ENCODE measurements at regions of chrX and their contacts with region 1.

Region 1: DNA sequence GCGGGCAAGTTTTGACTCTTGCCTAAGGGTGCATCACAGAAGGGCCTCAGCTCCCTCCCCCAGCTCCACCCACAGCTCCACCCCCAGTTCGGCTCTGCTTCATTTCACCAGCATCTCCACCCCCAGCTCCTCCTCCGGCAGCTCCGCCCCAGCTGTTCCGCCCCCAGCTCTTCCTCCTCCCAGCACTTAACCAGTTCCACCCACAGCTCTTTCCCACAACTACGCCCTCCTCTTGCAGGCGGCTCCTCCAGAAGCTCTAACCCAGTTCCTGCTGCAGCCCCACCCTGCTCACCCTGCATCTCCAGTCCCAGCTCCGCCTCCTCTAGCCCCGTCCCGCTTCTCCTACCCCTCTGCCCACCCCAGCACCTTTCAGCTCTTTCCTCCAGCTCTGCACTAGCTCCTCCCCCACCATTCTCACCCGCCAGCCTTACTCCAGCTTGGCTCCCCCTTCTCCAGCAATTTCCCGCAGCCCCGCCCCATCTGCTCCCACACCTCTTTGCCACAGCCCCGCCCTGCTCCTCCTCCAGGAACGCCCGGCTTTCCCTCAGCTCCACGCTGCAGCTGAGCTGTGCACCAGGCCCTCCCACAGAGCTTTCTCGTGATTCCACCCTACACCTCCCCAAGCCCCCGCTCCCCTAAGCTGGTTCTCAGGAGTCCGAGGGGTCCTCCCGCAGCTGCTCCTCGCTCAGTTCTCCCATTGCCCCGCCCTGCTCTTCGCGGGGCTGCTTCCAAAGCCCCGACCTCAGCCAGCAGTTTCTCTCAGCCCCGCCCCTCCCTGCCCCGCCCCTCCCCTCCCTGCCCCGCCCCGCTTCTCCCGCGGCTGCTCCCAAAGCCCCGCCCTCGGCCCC is 1.3 kb upstream of the EOLA1 start:
- DNase-seq: peak; percentile 83
- ATAC-seq: peak; percentile 74
- H3K4me3 ChIP-seq: peak overlapping the region; percentile 44; the same call in 1 of the 2 replicates
- H3K27ac ChIP-seq: peak overlapping the region; percentile 18; the same call in 1 of the 2 replicates
- H3K4me1 ChIP-seq: peaks cover 4% of the 10 kb centered on the region; the same call in 1 of the 2 replicates
- H3K27me3 ChIP-seq: no peaks in the 10 kb centered on the region
- CTCF ChIP-seq: no peak
- EP300 ChIP-seq: no peak
- POLR2A ChIP-seq: no peak; the same call in 1 of the 2 replicates
- RAD21 ChIP-seq: no peak

Region 2: DNA sequence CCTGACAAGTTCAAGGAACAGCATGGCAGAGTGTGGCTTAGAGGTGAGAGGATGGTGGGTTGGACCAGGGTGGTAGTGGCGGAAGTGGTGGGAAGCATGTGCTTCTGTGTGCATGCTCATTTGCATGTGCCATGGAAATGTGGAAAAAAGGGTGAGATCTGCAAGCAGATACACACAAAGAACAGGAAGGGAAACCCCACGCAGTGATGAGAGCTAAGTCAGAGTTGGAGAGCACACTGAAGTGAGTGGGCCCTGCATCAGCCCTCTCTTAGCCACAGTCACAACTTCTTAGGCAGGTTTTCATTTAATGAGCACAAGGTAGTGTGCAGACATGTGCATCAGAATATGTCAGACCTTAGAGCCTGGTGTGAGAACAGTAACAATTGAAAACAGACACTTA is 555.3 kb before region 1 on chrX:
- CTCF ChIA-PET with region 1: no interaction called
- POLR2A ChIA-PET with region 1: no interaction called
- RAD21 ChIA-PET with region 1: no interaction called
- SMC1A ChIA-PET with region 1: no interaction called
- in situ Hi-C with region 1: no loop called
- intact Hi-C with region 1: no loop called
- DNase-seq: no peak
- ATAC-seq: no peak
- H3K4me3 ChIP-seq: no peak overlapping the region
- H3K27ac ChIP-seq: no peak overlapping the region
- H3K4me1 ChIP-seq: no peaks in the 10 kb centered on the region
- H3K27me3 ChIP-seq: no peaks in the 10 kb centered on the region
- CTCF ChIP-seq: no peak
- EP300 ChIP-seq: no peak
- POLR2A ChIP-seq: no peak
- RAD21 ChIP-seq: no peak

Region 3: GRCh38 chrX:149504915-149505651 is 34.4 kb before region 1 on chrX and contains the start of gene IDS:
- CTCF ChIA-PET with region 1: interaction called, 16 read pairs
- POLR2A ChIA-PET with region 1: interaction called, 12 read pairs
- RAD21 ChIA-PET with region 1: interaction called, 13 read pairs
- SMC1A ChIA-PET with region 1: interaction called, 4 read pairs
- in situ Hi-C with region 1: no loop called
- intact Hi-C with region 1: loop called (anchors 2 kb)
- DNase-seq: peak; percentile 37
- ATAC-seq: peak; percentile 80
- H3K4me3 ChIP-seq: peak within 1 kb of the TSS; percentile 65
- H3K27ac ChIP-seq: peak within 1 kb of the TSS; percentile 67
- H3K4me1 ChIP-seq: peaks cover 21% of the 10 kb centered on the region
- H3K27me3 ChIP-seq: no peaks in the 10 kb centered on the region; a peak in 2 of 4 replicates
- CTCF ChIP-seq: no peak
- EP300 ChIP-seq: no peak
- POLR2A ChIP-seq: peak; percentile 92
- RAD21 ChIP-seq: no peak
- polyA plus RNA-seq, gene IDS: 6.1 to 9.6 TPM

Region 4: GRCh38 chrX:149527705-149528104 is 11.8 kb before region 1 on chrX:
- CTCF ChIA-PET with region 1: interaction called, 16 read pairs
- POLR2A ChIA-PET with region 1: interaction called, 9 read pairs
- RAD21 ChIA-PET with region 1: interaction called, 11 read pairs
- SMC1A ChIA-PET with region 1: interaction called, 16 read pairs
- in situ Hi-C with region 1: no loop called
- intact Hi-C with region 1: no loop called
- DNase-seq: no peak
- ATAC-seq: peak; percentile 43
- H3K4me3 ChIP-seq: no peak overlapping the region
- H3K27ac ChIP-seq: no peak overlapping the region
- H3K4me1 ChIP-seq: peaks cover 18% of the 10 kb centered on the region
- H3K27me3 ChIP-seq: no peaks in the 10 kb centered on the region
- CTCF ChIP-seq: peak; percentile 53 to 63 (median 62); a peak in 5 of 6 replicates
- EP300 ChIP-seq: no peak
- POLR2A ChIP-seq: no peak
- RAD21 ChIP-seq: peak; percentile 62

Region 5: DNA sequence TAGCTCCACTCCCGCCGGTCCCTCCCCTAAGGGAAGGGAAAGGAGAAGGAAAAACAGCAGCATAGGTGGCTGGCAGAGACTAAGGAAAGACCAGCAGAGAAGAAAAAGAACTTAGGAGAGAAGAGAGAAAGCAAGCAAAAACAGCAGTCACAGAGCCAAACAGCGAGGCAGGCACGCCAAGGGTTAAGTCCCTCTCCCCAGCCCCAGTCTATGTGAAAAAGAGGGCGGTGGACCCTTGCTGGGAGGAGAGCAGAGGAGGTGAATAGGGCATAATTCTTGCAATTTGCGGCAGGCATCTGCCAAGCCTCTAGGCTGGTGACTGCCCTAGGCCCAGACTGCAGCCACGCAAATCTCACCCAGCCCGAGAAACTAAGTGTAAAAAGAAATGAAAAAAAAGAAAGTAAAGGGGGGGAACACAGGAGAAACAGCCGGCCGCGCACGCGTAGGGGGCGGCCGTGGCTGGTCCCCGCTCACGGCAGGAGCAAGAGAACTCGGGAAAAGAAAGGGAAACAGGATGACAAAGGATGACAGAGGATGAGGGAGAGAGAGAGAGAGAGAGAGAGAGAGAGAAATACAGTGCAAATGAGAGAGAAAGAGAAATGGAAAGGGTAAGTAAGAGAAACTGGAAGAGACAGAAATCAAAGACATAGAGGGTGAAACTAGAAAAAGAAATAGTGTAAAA is 290.8 kb after region 1 on chrX:
- CTCF ChIA-PET with region 1: no interaction called
- POLR2A ChIA-PET with region 1: no interaction called
- RAD21 ChIA-PET with region 1: no interaction called
- SMC1A ChIA-PET with region 1: no interaction called
- in situ Hi-C with region 1: no loop called
- intact Hi-C with region 1: loop called (anchors 10 kb)
- DNase-seq: peak; percentile 17
- ATAC-seq: peak; percentile 82
- H3K4me3 ChIP-seq: peak overlapping the region; percentile 57; the same call in 1 of the 2 replicates
- H3K27ac ChIP-seq: peak overlapping the region; percentile 79
- H3K4me1 ChIP-seq: no peaks in the 10 kb centered on the region
- H3K27me3 ChIP-seq: no peaks in the 10 kb centered on the region
- CTCF ChIP-seq: no peak
- EP300 ChIP-seq: no peak
- POLR2A ChIP-seq: no peak
- RAD21 ChIP-seq: no peak

Region 6: DNA sequence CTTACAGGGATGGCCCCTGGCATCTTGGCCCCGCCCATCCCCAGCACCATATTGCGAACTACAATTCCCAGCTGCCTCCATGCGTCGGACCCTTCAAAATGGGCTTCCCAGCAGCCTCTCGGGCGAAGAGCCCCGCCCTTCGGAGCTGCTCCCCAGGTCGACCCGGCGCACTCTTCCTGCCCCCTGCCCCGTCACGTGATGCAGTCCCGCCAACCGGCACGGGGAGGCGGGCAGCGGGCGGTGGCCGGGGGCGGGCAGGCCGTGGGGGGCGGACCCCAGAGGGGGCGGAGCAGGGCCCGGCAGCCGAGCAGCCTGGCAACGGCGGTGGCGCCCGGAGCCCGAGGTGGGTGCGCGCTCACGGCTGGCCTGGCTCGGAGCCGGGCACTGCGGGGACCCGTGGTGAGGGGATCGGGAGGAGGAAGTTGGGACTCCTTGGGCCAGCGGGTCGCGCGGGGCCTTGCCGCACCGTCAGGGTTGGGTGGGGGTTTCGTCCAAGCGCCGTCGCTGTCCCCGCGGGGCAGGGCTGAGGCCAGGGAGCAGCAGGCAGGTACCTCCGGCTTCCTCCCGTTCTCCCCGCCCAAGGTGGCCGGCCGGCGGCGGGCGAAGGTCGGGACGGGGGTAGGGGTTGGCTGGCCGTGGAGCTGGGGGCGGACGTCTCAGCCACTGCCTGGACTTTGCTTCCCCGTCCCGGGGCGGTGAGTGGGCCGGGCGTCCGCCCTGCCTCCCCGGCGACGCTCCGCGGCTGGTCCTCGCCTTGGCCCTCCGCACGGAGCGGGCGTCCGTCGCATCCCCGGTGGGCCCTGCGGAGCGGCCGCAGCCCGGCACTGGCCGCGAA is 1029.0 kb after region 1 on chrX and contains the start of gene MTM1:
- CTCF ChIA-PET with region 1: no interaction called
- POLR2A ChIA-PET with region 1: no interaction called
- RAD21 ChIA-PET with region 1: no interaction called
- SMC1A ChIA-PET with region 1: no interaction called
- in situ Hi-C with region 1: no loop called
- intact Hi-C with region 1: loop called (anchors 10 kb)
- DNase-seq: peak; percentile 71
- ATAC-seq: peak; percentile 93
- H3K4me3 ChIP-seq: peak within 1 kb of the TSS; percentile 69
- H3K27ac ChIP-seq: peak within 1 kb of the TSS; percentile 31
- H3K4me1 ChIP-seq: peaks cover 4% of the 10 kb centered on the region; the same call in 1 of the 2 replicates
- H3K27me3 ChIP-seq: no peaks in the 10 kb centered on the region
- CTCF ChIP-seq: no peak
- EP300 ChIP-seq: no peak
- POLR2A ChIP-seq: peak; percentile 61
- RAD21 ChIP-seq: no peak
- polyA plus RNA-seq, gene MTM1: 3.9 to 5.3 TPM